Activated naive CD8-positive, alpha-beta T cell treated with anti-CD3 and anti-CD28 coated beads, Interleukin-2, amount 10 ng/mL, durations not matched to agents 7 days and 5 days (primary cell): ENCODE measurements at regions of chr15 and their contacts with region 1.

Region 1: GRCh38 chr15:42490671-42491544 is at the start of gene ZNF106:
- DNase-seq: peak; percentile 91
- ATAC-seq: peak; percentile 64
- H3K4me3 Mint-ChIP-seq: peak within 1 kb of the TSS; percentile 98
- H3K27ac Mint-ChIP-seq: peak within 1 kb of the TSS; percentile 93
- H3K4me1 Mint-ChIP-seq: peaks cover 29% of the 10 kb centered on the region
- H3K27me3 Mint-ChIP-seq: no peaks in the 10 kb centered on the region
- total RNA-seq, gene ZNF106: 50.9 to 51.8 TPM

Region 2: DNA sequence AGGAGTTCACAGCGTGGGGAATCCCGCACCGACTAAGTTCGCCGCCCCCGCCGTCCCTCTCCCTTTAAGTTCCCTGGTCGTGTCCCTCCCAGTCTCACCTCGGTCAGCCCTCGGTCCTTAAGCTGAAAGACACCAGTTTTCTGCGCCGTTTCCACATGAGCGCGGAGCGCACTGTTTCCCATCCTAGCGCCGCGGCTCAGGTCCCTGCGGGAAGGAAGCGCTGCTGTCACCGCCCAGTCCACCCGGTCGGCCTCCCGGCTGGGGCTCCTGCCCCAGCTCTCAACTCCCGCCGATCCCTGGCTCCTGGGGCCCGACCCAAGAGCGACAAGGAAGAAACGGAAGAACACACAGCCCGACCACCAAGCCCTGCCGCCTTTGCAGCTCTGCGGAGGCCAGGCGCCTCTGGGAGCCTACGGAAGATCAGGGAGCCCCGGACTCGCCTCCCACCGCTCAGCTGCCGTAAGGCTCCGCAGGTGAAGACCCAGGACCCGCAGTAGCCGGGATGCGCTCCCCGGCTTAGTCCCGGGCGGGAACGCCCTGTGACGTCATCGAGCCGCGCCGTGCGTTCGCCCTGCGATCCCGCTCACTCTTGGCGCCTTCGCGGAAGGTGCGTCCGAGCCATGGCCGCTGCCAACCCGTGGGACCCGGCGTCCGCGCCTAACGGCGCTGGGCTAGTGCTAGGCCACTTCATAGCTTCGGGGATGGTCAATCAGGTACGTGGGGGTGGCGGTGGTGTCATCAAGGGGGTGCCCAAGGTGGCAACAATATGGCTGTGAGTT is 57.5 kb after region 1 on chr15 and contains the starts of genes HAUS2 and LRRC57:
- POLR2A ChIA-PET with region 1: interaction called, 16 read pairs
- DNase-seq: peak; percentile 93
- ATAC-seq: peak; percentile 91
- H3K4me3 Mint-ChIP-seq: peak within 1 kb of the TSS; percentile 98
- H3K27ac Mint-ChIP-seq: peak within 1 kb of the TSS; percentile 99
- H3K4me1 Mint-ChIP-seq: peaks cover 38% of the 10 kb centered on the region
- H3K27me3 Mint-ChIP-seq: no peaks in the 10 kb centered on the region
- total RNA-seq, gene HAUS2: 28.7 to 30.2 TPM
- total RNA-seq, gene LRRC57: 24.5 to 25.8 TPM